T-cell (primary cell): ENCODE measurements at regions of chr13 and their contacts with region 1.

Region 1: DNA sequence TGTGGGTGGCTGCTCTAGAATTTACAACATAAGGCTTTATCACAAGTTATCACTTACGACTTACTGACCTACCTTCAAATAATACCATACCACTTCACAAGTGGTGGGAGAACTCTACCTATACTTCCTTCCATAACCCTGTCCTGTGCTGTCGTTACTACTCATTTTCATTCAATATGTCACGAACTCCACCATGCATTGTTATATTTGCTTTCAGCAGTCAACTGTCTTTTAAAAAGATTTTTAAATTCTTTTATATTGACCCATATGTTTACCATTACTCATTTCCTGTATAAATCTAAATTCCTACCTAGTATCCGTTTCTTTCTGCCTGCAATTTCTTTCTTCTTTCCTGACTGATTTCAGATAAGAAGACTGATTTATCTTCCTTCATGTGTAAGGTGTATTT is 200.0 kb downstream of the KLF12 start:
- DNase-seq: no peak
- ATAC-seq: no peak
- H3K4me3 ChIP-seq: no peak overlapping the region
- H3K4me3 Mint-ChIP-seq: no peak overlapping the region
- H3K27ac ChIP-seq: no peak overlapping the region
- H3K27ac Mint-ChIP-seq: peak overlapping the region; percentile 9 to 24
- H3K4me1 ChIP-seq: peaks cover 2 to 17% of the 10 kb centered on the region in 2 experiments
- H3K4me1 Mint-ChIP-seq: peaks cover 46 to 72% (median 63%) of the 10 kb centered on the region in 3 donors
- H3K27me3 ChIP-seq: no peaks in the 10 kb centered on the region
- H3K27me3 Mint-ChIP-seq: no peaks in the 10 kb centered on the region

Region 2: GRCh38 chr13:73918691-73919090 is 15.5 kb before region 1 on chr13:
- CTCF ChIA-PET with region 1: interaction called in 1 of 2 experiments, 4 read pairs
- POLR2A ChIA-PET with region 1: interaction called in 1 of 2 experiments, 11 read pairs
- DNase-seq: no peak
- ATAC-seq: no peak
- H3K4me3 ChIP-seq: no peak overlapping the region
- H3K4me3 Mint-ChIP-seq: no peak overlapping the region
- H3K27ac ChIP-seq: no peak overlapping the region
- H3K27ac Mint-ChIP-seq: no peak overlapping the region
- H3K4me1 ChIP-seq: peaks cover 0 to 5% of the 10 kb centered on the region in 2 experiments
- H3K4me1 Mint-ChIP-seq: peaks cover 72 to 88% (median 81%) of the 10 kb centered on the region in 3 donors
- H3K27me3 ChIP-seq: no peaks in the 10 kb centered on the region
- H3K27me3 Mint-ChIP-seq: no peaks in the 10 kb centered on the region

Region 3: DNA sequence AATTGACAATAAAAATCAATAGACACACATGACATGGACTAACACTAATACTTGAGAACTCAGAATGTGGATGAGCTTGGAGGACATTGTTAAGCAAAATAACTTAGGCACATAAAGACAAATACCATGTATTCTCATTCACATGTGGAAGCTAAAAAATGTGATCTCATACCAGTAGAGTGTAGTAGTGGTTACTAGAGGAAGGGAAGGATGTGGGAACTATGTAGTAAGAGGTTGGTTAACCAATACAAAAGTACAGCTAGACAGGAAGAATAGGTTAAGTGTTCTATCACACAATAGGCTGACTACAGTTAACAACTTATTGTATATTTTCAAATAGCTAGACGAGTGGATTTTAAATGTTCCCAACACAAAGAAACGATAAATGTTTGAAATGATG is 615.8 kb after region 1 on chr13:
- CTCF ChIA-PET with region 1: interaction called in 1 of 2 experiments, 10 read pairs
- POLR2A ChIA-PET with region 1: no interaction called
- DNase-seq: peak in 1 of 35 experiments; percentile 39
- ATAC-seq: peak; percentile 72 to 95 (median 86)
- H3K4me3 ChIP-seq: no peak overlapping the region
- H3K4me3 Mint-ChIP-seq: no peak overlapping the region
- H3K27ac ChIP-seq: no peak overlapping the region
- H3K27ac Mint-ChIP-seq: no peak overlapping the region
- H3K4me1 ChIP-seq: peaks cover 5 to 6% of the 10 kb centered on the region in 2 experiments
- H3K4me1 Mint-ChIP-seq: peaks cover 8 to 17% (median 10%) of the 10 kb centered on the region in 3 donors
- H3K27me3 ChIP-seq: no peaks in the 10 kb centered on the region
- H3K27me3 Mint-ChIP-seq: no peaks in the 10 kb centered on the region